ENCODE measurements at regions of chr1 and their contacts with region 1.

Region 1: GRCh38 chr1:17606826-17607440 is 67.4 kb downstream of the ARHGEF10L start:
- DNase-seq: no peak
- H3K4me3 ChIP-seq: no peak overlapping the region
- H3K27me3 ChIP-seq: no peaks in the 10 kb centered on the region
- CTCF ChIP-seq: peak; percentile 97

Region 2: DNA sequence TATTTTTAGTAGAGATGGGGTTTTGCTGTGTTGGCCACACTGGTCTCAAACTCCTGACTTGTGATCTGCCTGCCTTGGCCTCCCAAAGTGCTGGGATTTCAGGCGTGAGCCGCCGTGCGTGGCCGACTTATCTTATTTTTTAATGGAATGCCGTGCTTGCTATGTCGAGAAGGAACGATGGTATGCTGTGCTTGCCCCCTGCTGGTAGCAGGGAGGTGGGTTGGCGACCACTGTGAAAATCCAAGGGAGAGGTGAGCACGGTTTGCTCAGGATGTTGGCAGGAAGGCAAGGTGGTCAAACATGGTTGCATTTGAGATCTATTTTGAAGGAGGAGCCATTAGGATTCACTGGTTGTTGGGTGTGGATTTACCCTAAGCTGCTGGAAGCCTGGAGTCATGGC is 121.7 kb before region 1 on chr1:
- CTCF ChIA-PET with region 1: interaction called, 20 read pairs
- POLR2A ChIA-PET with region 1: no interaction called
- DNase-seq: no peak
- H3K4me3 ChIP-seq: no peak overlapping the region
- H3K27me3 ChIP-seq: no peaks in the 10 kb centered on the region
- CTCF ChIP-seq: peak; percentile 37; the same call in 1 of the 2 replicates

Region 3: GRCh38 chr1:17587989-17588685 is 18.8 kb before region 1 on chr1:
- CTCF ChIA-PET with region 1: interaction called, 43 read pairs
- POLR2A ChIA-PET with region 1: no interaction called
- DNase-seq: peak; percentile 37
- H3K4me3 ChIP-seq: no peak overlapping the region
- H3K27me3 ChIP-seq: no peaks in the 10 kb centered on the region
- CTCF ChIP-seq: no peak

Region 4: DNA sequence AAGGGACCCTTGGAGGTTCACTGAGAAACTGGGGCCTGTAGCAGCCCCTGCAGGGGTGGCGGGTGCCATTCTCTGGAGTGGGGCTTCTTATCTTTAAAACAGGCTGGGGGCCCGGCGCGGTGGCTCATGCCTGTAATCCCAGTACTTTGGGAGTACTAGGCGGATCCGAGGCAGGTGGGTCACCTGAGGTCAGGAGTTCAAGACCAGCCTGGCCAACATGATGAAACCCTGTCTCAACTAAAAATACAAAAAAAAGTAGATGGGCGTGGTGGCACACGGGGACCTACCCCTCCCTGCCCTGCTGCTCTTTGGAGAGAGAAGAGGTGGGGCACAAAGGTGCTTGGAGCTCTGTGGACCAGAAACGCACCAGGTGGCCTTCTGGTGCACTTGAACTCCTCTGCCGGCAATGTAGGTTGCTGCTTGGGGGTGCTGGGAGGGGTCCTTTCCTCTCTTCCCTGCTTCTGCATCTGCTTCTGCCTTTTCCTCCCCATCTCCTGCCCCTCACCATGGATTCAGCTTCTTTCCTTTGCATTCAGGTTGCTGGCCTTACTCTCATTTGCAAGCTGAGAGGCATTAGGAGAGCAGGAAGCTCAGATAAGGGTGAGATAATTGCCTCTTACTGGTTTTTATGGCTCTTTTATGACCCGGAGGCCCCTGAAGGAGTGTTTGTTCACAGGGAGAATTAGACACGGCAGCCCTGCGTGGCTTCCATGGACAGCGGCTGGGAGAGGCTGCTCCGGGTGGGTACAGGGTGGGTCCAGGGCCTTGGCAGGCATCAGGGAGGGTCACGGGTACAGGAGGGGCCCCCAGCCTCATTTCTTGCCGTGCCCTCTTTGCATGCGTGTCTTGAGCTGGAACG is 10.1 kb before region 1 on chr1:
- CTCF ChIA-PET with region 1: interaction called, 51 read pairs
- POLR2A ChIA-PET with region 1: no interaction called
- DNase-seq: no peak
- H3K4me3 ChIP-seq: no peak overlapping the region
- H3K27me3 ChIP-seq: no peaks in the 10 kb centered on the region
- CTCF ChIP-seq: no peak

Region 5: DNA sequence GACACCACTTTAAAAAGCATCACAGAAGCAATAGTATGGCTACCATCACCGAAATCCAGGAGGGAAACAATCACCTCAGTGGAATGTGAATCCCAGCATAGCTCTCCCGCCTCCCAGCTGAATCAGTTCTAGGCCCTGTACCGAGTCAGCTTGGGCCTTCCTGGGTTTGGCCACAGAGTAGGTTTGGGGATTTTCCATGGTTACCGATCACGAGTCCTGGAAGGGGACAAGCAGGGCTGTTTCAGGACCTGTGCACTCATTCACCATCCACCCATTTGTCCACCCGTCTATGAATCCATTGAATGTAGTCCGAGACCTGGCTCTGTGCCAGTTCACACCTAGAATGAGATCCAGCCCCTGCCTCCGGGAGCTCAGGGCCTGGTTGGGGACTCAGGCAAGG is 26.7 kb after region 1 on chr1:
- CTCF ChIA-PET with region 1: interaction called, 12 read pairs
- POLR2A ChIA-PET with region 1: no interaction called
- DNase-seq: no peak
- H3K4me3 ChIP-seq: no peak overlapping the region
- H3K27me3 ChIP-seq: no peaks in the 10 kb centered on the region
- CTCF ChIP-seq: no peak

Measured in BJ (cell line).